ENCODE measurements at regions of chr2 and their contacts with region 1.

Region 1: DNA sequence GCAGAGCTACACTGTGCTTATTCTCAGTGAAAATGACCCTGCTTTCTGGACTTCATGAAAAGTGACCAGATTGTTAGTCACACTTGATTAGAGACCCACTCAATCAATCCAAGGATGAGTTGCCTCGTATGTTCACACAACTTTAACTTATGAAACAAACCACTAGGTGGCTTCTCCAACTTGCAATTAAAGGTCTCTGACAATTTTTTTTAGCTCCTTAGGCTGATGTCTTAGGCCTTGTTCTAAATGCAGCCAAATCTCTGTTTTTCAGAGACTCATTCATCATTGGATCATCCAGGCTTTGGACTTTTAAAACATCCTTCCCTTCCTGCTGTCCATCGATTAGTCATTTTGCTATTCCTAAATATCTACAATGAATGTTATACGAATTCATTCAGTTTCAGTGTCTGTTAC is 63.4 kb downstream of the MREG start:
- DNase-seq: peak; percentile 27 to 54
- ATAC-seq: peak; percentile 76 to 91; a peak in 5 of 6 replicates
- H3K4me3 ChIP-seq: no peak overlapping the region
- H3K27ac ChIP-seq: no peak overlapping the region
- H3K4me1 ChIP-seq: no peaks in the 10 kb centered on the region
- CTCF ChIP-seq: peak; percentile 77
- EP300 ChIP-seq: no peak
- POLR2A ChIP-seq: no peak
- RAD21 ChIP-seq: peak; percentile 69 to 75

Region 2: GRCh38 chr2:215861607-215862350 is 88.2 kb before region 1 on chr2:
- CTCF ChIA-PET with region 1: no interaction called
- POLR2A ChIA-PET with region 1: no interaction called
- DNase-seq: no peak
- ATAC-seq: no peak
- H3K4me3 ChIP-seq: no peak overlapping the region
- H3K27ac ChIP-seq: no peak overlapping the region
- H3K4me1 ChIP-seq: no peaks in the 10 kb centered on the region
- CTCF ChIP-seq: no peak
- EP300 ChIP-seq: no peak
- POLR2A ChIP-seq: no peak
- RAD21 ChIP-seq: no peak

Region 3: DNA sequence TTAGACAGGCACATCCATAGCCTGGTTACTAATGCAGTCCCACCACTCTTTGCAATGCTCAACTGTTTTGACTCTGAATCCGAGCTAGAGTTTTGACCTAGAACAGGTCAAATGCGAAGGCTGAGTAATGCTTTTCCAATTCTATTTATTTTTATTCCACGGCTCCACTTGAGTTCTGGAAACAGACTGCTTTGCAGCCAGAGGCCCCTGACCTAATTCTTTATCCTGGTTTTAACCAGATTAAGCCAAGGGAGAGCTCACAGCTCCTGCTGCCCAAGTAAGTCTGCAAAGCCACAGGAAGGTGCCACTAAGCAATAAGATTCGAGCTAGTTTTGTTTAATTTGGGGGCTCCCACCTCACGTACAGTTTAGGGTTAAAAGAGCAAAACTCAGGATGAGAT is 12.0 kb after region 1 on chr2:
- CTCF ChIA-PET with region 1: interaction called, 17 read pairs
- POLR2A ChIA-PET with region 1: no interaction called
- DNase-seq: no peak
- ATAC-seq: no peak
- H3K4me3 ChIP-seq: no peak overlapping the region
- H3K27ac ChIP-seq: no peak overlapping the region
- H3K4me1 ChIP-seq: no peaks in the 10 kb centered on the region
- CTCF ChIP-seq: no peak
- EP300 ChIP-seq: no peak
- POLR2A ChIP-seq: no peak
- RAD21 ChIP-seq: no peak

Region 4: GRCh38 chr2:215969131-215969841 is 19.3 kb after region 1 on chr2:
- CTCF ChIA-PET with region 1: interaction called, 17 read pairs
- POLR2A ChIA-PET with region 1: no interaction called
- DNase-seq: no peak
- ATAC-seq: no peak
- H3K4me3 ChIP-seq: no peak overlapping the region
- H3K27ac ChIP-seq: no peak overlapping the region
- H3K4me1 ChIP-seq: peaks cover 14% of the 10 kb centered on the region
- CTCF ChIP-seq: no peak
- EP300 ChIP-seq: no peak
- POLR2A ChIP-seq: no peak
- RAD21 ChIP-seq: no peak

Region 5: DNA sequence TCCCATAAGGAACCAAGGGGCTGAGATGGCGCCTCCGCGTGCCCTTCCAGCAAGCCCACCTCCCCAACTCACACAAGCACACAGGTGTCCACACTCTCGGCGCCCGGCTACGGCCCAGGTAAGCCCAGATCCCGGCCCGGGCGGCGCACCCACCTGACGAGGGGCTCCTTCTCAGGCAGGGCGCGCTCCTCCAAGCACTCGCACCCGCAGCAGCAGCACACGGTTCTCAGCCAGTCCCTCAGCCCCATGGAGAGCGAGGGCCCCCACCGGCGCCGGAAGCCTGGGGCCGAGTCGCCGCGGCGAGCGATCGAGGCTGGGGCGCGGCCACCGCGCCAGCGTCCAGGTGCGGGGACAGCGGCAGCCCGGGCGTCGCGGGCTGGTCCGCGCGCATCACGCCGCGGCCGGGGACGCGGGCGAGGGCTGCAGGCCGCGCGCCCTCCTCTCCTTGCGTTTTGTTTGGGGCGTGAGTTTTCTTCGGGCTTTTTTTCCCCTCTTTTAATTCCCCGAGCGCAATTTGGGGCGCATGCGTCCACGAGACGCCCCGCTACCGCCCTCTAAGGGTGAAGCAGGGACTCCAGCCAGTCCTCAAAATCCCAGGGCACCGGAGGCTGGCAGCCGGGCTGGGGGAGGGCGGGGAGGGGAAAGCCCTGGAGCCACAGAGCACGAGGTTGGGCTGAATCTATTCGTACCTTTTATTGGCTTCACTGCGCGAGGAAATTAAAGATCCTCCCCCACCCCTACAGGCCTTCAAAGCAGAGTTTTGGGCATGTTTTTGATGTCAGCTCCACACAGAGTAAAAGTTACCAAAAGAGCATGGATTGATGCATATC is 63.3 kb after region 1 on chr2 and contains the start of gene MREG:
- CTCF ChIA-PET with region 1: interaction called, 19 read pairs
- POLR2A ChIA-PET with region 1: no interaction called
- DNase-seq: peak; percentile 76 to 91
- ATAC-seq: peak; percentile 88
- H3K4me3 ChIP-seq: peak within 1 kb of the TSS; percentile 70
- H3K27ac ChIP-seq: peak within 1 kb of the TSS; percentile 75 to 91
- H3K4me1 ChIP-seq: peaks cover 22% of the 10 kb centered on the region
- CTCF ChIP-seq: peak; percentile 73
- EP300 ChIP-seq: no peak
- POLR2A ChIP-seq: no peak
- RAD21 ChIP-seq: peak; percentile 28 to 37; a peak in 3 of 5 replicates
- polyA plus RNA-seq, gene MREG: 7.9 and 8.0 TPM in 2 replicates

Region 6: GRCh38 chr2:216023055-216023648 is 73.2 kb after region 1 on chr2:
- CTCF ChIA-PET with region 1: interaction called, 55 read pairs
- POLR2A ChIA-PET with region 1: no interaction called
- DNase-seq: peak; percentile 58 to 74
- ATAC-seq: peak; percentile 89 to 97
- H3K4me3 ChIP-seq: no peak overlapping the region
- H3K27ac ChIP-seq: no peak overlapping the region
- H3K4me1 ChIP-seq: no peaks in the 10 kb centered on the region
- CTCF ChIP-seq: peak; percentile 61
- EP300 ChIP-seq: no peak
- POLR2A ChIP-seq: no peak
- RAD21 ChIP-seq: peak; percentile 52 to 54; a peak in 4 of 5 replicates

Region 7: DNA sequence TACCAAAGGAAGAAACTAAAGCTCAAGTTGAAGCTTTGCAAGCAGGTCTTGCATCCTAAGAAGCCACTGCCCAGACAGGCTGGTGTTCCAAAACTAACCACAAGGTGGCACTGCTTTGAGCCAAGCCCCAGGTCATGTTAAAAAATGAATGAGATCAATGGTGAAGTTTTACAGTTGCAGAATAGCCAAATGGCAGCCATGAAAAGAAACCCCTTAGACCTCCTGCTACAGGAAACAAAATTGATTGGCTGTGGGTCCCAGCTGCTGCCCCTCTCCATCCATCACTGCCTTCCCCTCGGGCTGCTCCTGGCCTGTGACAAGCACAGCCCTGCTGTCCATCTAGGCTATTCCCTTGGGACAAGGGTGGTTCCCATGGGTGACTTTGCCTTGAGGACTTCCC is 84.1 kb after region 1 on chr2:
- CTCF ChIA-PET with region 1: interaction called, 12 read pairs
- POLR2A ChIA-PET with region 1: no interaction called
- DNase-seq: peak; percentile 69 to 80
- ATAC-seq: peak; percentile 57 to 91; a peak in 5 of 6 replicates
- H3K4me3 ChIP-seq: no peak overlapping the region
- H3K27ac ChIP-seq: no peak overlapping the region
- H3K4me1 ChIP-seq: no peaks in the 10 kb centered on the region
- CTCF ChIP-seq: peak; percentile 79
- EP300 ChIP-seq: no peak
- POLR2A ChIP-seq: no peak
- RAD21 ChIP-seq: peak; percentile 53